H1 (cell line): ENCODE measurements at regions of chr2 and their contacts with region 1.

Region 1: DNA sequence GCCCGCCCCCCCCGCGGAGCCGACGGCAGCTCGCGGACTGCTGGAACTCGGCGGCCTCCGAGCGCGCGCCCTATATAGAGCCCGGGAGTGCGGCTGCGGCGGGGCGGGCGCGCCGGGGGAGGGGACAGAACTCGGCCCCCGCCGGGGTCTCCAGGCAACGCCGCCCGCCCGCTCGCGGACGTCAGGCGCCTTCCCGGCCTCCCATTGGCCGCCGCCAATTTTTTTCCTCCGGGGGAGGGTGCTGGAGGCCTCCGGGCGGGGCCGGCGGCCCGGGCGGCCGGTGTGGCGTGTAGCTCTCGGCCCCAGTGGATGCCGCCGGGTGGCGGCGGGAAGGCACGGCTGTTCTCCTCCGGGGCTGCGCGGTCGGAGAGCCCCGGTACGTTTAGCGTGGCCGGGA is at the start of gene ZFP36L2:
- DNase-seq: peak in 1 of 2 experiments; percentile 90
- H3K4me3 ChIP-seq: peak within 1 kb of the TSS; percentile 76 to 88 (median 85)
- H3K27ac ChIP-seq: peak within 1 kb of the TSS; percentile 95
- H3K4me1 ChIP-seq: peaks cover 5 to 16% (median 10%) of the 10 kb centered on the region in 4 experiments; a peak in 5 of 7 replicates
- H3K27me3 ChIP-seq: no peaks in the 10 kb centered on the region
- CTCF ChIP-seq: no peak
- EP300 ChIP-seq: no peak
- POLR2A ChIP-seq: peak in 1 of 2 experiments; percentile 86; a peak in 2 of 3 replicates
- RAD21 ChIP-seq: no peak
- total RNA-seq, gene ZFP36L2: 102 and 109 TPM in 2 replicates

Region 2: DNA sequence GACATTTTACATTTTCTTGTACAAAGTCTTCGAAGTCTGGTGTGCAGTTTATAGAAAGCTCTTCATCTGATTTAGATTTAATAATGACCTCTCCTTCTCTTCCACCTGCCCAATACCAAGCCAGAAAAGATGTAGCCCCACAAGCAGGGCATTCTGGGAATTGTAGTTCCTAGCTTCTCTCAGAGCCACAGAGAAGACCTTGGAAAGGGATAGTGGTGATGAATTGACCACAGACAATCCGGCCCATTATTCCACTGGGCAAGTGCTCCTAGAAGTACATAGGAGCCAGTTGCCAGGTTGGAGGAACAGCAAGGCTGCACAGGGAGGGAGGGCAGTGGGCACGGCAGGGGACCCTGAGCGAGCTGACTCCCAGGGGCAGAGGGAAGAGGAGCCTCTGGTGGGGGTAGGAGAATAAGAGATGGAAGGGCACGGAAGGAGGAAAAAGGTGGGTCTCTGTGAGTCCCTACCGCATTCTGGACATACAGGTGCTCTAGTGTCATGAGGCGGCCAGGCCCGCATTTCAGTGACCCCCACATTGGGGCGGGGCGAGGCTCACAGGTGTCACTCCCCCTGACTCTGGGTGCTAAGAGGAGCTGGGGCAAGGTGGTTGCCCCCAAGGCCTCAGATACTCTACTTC is 281.7 kb before region 1 on chr2:
- CTCF ChIA-PET with region 1: interaction called, 12 read pairs
- POLR2A ChIA-PET with region 1: no interaction called
- DNase-seq: no peak
- H3K4me3 ChIP-seq: no peak overlapping the region
- H3K27ac ChIP-seq: no peak overlapping the region
- H3K4me1 ChIP-seq: peaks cover 0 to 3% (median 0%) of the 10 kb centered on the region in 4 experiments; a peak in 3 of 7 replicates
- H3K27me3 ChIP-seq: no peaks in the 10 kb centered on the region
- CTCF ChIP-seq: no peak
- EP300 ChIP-seq: no peak
- POLR2A ChIP-seq: no peak
- RAD21 ChIP-seq: no peak

Region 3: GRCh38 chr2:43131024-43131889 is 95.3 kb before region 1 on chr2:
- CTCF ChIA-PET with region 1: interaction called, 66 read pairs
- POLR2A ChIA-PET with region 1: interaction called, 16 read pairs
- DNase-seq: no peak
- H3K4me3 ChIP-seq: no peak overlapping the region
- H3K27ac ChIP-seq: no peak overlapping the region
- H3K4me1 ChIP-seq: peaks cover 0 to 14% (median 5%) of the 10 kb centered on the region in 4 experiments; a peak in 3 of 7 replicates
- H3K27me3 ChIP-seq: no peaks in the 10 kb centered on the region
- CTCF ChIP-seq: peak in 2 of 3 experiments; percentile 63 to 65; a peak in 3 of 4 replicates
- EP300 ChIP-seq: no peak
- POLR2A ChIP-seq: no peak
- RAD21 ChIP-seq: peak; percentile 83 to 86

Region 4: DNA sequence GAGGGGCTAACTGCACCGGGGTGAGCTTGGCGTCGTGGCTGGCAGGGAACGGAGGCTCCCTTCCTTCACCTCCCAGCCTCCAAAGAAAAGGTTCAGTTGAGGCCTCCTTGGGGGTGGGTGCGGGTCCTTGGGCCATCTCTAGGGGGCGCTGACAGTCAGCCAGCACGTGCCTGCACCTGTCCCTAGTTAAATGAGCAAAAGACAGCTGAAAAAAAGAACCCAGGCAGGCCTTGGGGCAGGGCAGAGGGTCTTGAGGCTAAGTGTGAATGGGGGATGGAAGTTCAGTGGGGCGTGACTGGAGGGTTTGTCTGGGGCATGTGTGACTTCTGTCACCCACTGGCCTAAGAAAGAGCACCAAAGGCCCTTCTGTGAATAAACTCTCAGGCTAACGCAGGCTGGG is 56.6 kb before region 1 on chr2:
- CTCF ChIA-PET with region 1: interaction called, 75 read pairs
- POLR2A ChIA-PET with region 1: interaction called, 8 read pairs
- DNase-seq: peak in 1 of 2 experiments; percentile 88
- H3K4me3 ChIP-seq: no peak overlapping the region
- H3K27ac ChIP-seq: no peak overlapping the region
- H3K4me1 ChIP-seq: peaks cover 0 to 15% (median 2%) of the 10 kb centered on the region in 4 experiments; a peak in 6 of 7 replicates
- H3K27me3 ChIP-seq: no peaks in the 10 kb centered on the region
- CTCF ChIP-seq: peak; percentile 83 to 84 (median 83)
- EP300 ChIP-seq: no peak
- POLR2A ChIP-seq: no peak
- RAD21 ChIP-seq: peak; percentile 71 to 82

Region 5: DNA sequence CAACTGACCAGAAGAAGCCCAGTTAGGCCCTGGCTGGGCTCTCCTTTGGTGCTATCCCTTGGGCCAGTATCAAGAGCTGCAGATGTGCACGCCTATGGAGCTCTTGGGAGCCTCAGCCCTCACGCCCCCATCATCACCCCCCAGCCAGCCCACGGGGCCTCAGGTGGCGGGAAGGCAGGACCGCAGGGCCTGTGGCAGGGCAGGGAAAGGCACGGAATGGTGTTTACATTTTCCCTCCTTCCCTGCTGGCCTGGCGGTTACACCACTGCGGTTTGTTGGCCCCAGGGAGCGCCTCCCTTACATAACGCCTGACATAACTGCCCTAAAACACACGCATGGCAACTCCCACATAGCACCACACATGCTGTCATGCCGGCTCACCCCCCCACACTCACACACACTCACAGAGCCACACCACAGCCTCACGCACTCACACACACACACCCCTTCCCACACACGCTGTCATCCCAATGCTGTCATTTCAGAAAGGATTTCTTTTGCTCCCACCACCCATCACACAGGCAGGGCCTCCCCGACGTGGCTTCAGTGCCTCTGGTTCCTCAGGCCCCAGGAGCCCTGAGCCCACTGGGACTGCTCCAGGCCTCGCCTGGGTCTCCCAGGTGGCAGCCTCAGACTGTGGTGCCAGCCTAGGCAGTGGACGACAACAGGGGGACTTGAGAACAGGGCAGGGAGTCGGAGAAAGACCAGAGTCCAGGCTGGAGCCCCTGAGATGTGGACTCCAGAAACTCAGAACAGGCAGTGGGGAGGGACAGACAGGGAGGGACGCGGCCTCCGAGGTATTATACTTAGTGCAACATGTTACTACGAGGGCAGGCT is 15.9 kb before region 1 on chr2:
- CTCF ChIA-PET with region 1: interaction called, 101 read pairs
- POLR2A ChIA-PET with region 1: interaction called, 32 read pairs
- DNase-seq: no peak
- H3K4me3 ChIP-seq: no peak overlapping the region
- H3K27ac ChIP-seq: no peak overlapping the region
- H3K4me1 ChIP-seq: peaks cover 0 to 12% (median 6%) of the 10 kb centered on the region in 4 experiments; a peak in 5 of 7 replicates
- H3K27me3 ChIP-seq: no peaks in the 10 kb centered on the region
- CTCF ChIP-seq: no peak
- EP300 ChIP-seq: no peak
- POLR2A ChIP-seq: no peak
- RAD21 ChIP-seq: no peak

Region 6: DNA sequence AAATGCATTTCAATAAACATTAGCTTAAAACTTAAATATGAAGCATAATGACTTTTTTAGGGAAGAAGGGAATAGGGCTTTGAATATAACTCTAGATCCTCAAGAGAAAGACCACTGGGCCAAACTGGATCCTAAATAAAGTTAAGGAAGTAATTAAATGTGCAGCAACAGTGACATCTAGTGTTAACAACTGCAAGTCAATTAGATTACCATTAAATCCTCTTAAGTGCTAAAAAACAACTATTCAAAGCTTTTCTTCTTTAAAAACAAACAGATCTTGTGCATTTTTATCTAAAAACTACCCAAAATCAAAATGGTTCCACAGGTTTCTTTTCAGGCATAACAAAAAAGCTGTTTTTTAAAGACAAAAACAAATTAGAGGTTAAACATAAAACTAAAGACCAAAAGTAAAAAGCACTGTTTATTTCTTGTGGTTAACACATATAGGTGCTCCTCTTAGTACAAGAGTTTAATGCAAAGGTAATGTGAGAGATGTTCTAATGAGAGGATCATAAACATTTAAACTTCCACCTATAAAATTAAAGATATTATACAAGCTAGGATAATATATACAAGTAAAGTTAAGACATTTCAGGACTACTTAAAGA is 257.9 kb after region 1 on chr2:
- CTCF ChIA-PET with region 1: interaction called, 21 read pairs
- POLR2A ChIA-PET with region 1: interaction called, 6 read pairs
- DNase-seq: peak in 1 of 2 experiments; percentile 21
- H3K4me3 ChIP-seq: no peak overlapping the region
- H3K27ac ChIP-seq: no peak overlapping the region
- H3K4me1 ChIP-seq: no peaks in the 10 kb centered on the region
- H3K27me3 ChIP-seq: no peaks in the 10 kb centered on the region
- CTCF ChIP-seq: peak in 2 of 3 experiments; percentile 38 to 51; a peak in 2 of 4 replicates
- EP300 ChIP-seq: no peak
- POLR2A ChIP-seq: no peak
- RAD21 ChIP-seq: peak; percentile 75 to 81